Activated T-helper 2 cell treated with anti-CD3 and anti-CD28 coated beads, Interferon-gamma antibody, Interleukin-2, Interleukin-4, amounts not matched to agents 10 μg/mL and 5 μg/mL and 100 μg/mL, durations not matched to agents 14 hours and 24 hours and 36 hours (primary cell): ENCODE measurements at regions of chr7 and their contacts with region 1.

Region 1: DNA sequence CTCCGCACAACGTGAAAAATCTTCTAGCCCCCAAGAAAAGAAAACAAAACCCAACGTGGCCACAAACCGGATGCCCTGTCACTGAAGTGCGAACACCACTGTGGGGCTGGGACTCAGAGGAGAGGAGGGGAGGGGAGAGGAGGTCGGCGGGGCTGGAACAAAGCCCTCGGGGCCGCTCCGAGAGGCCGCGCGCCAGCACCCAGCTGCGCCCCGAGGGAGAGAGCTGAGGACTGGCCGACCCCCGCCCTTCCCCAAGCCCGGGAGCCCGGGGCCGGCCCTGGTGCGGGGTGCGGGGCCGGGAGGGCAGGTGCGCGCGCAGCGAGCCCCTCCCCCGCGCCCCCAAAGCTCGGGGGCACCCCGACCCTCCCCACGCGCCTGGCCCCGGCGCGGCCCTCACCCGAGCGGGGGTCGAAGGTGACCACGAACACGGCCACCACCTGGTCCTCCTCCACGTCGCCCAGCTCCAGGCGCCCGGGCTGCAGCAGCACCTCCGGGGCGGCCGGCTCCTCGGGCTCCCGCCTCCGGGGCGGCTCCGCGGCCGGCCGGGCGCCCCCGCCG is 398 bp downstream of the DENND11 start:
- DNase-seq: peak; percentile 65
- H3K4me3 Mint-ChIP-seq: peak overlapping the region; percentile 81
- H3K27ac Mint-ChIP-seq: peak overlapping the region; percentile 44
- H3K4me1 Mint-ChIP-seq: peaks cover 32% of the 10 kb centered on the region
- H3K27me3 Mint-ChIP-seq: peaks cover 18% of the 10 kb centered on the region

Region 2: GRCh38 chr7:141362580-141363435 is 338.8 kb before region 1 on chr7:
- intact Hi-C with region 1: no loop called
- DNase-seq: no peak
- H3K4me3 Mint-ChIP-seq: no peak overlapping the region
- H3K27ac Mint-ChIP-seq: no peak overlapping the region
- H3K4me1 Mint-ChIP-seq: no peaks in the 10 kb centered on the region
- H3K27me3 Mint-ChIP-seq: no peaks in the 10 kb centered on the region

Region 3: DNA sequence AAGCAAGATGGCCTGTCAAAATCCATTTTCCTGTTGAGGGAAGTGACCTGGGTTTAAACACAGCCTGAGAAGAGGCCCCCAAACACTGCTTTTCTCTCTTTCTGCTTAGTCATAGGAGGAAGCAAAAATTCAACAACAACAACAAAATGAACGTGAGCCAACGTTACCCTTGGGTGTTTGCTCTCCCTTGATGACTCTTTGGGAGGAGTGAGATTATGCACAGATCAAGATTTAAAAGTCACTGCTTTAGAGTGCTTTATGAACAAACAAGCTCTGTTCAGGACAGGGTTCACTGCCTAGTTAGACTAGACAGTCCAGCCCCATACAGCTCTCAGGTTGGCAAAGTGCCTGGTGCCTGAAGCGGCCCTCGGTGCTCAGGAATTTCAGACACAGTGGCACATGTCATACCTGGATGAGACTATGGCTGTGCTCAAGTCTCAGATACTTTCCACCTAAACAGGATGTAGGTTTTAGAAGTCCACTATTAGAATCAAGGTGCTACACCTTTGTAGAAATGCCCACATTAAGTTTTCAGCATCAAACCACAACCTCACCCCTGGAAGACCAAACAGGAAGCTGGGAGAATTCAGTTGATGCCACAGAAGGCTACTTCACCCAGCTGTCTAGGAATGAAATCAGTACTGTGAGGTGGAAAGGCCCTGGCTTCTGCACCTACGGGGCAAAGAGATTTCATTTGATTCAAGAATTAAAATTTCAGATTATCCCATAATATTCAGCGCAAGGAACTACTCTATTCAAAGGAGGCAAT is 38.3 kb before region 1 on chr7:
- intact Hi-C with region 1: loop called (anchors 5 kb)
- DNase-seq: no peak
- H3K4me3 Mint-ChIP-seq: no peak overlapping the region
- H3K27ac Mint-ChIP-seq: peak overlapping the region; percentile 63
- H3K4me1 Mint-ChIP-seq: peaks cover 20% of the 10 kb centered on the region
- H3K27me3 Mint-ChIP-seq: no peaks in the 10 kb centered on the region

Region 4: GRCh38 chr7:141674702-141675101 is 26.9 kb before region 1 on chr7:
- intact Hi-C with region 1: loop called (anchors 2 kb)
- DNase-seq: no peak
- H3K4me3 Mint-ChIP-seq: no peak overlapping the region
- H3K27ac Mint-ChIP-seq: peak overlapping the region; percentile 68
- H3K4me1 Mint-ChIP-seq: peaks cover 33% of the 10 kb centered on the region
- H3K27me3 Mint-ChIP-seq: no peaks in the 10 kb centered on the region

Region 5: GRCh38 chr7:141737834-141738591 is 36.4 kb after region 1 on chr7 and contains the start of gene SSBP1:
- intact Hi-C with region 1: loop called (anchors 1 kb)
- DNase-seq: peak; percentile 93
- H3K4me3 Mint-ChIP-seq: peak within 1 kb of the TSS; percentile 94
- H3K27ac Mint-ChIP-seq: peak within 1 kb of the TSS; percentile 93
- H3K4me1 Mint-ChIP-seq: peaks cover 23% of the 10 kb centered on the region
- H3K27me3 Mint-ChIP-seq: no peaks in the 10 kb centered on the region
- total RNA-seq, gene SSBP1: 244 and 245 TPM in 2 replicates